Activated CD4-positive, alpha-beta T cell treated with anti-CD3 and anti-CD28 coated beads, Interleukin-2, amount 10 ng/mL, durations not matched to agents 24 days and 14 days (primary cell): ENCODE measurements at regions of chr10 and their contacts with region 1.

Region 1: DNA sequence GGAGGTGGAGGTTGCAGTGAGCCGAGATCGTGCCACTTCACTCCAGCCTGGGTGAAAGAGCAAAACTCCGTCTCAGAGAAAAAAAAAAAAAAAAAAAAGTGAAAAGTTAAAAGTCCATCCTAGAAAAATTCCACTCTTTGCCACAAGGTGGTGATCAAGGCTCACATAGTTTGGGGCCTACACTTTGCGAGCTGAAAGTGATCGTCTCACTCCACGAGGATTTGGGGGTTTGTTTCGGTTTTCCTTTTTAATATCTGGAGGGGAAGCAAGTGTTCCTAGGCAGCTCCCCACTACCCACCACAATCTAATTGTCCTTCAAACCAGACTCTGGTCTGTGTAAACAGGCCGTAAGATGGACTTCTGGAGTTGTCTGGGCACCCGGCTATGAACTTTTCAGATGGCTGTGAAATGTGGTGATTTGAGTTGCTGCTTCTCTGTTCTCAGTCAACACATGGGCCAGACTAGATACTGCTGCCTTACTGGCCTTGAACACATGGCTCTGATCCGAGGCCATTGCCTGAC is 27.1 kb downstream of the PRLHR start:
- DNase-seq: peak; percentile 90
- H3K4me3 Mint-ChIP-seq: no peak overlapping the region
- H3K27ac Mint-ChIP-seq: no peak overlapping the region
- H3K4me1 Mint-ChIP-seq: no peaks in the 10 kb centered on the region
- H3K27me3 Mint-ChIP-seq: peaks cover 8% of the 10 kb centered on the region

Region 2: DNA sequence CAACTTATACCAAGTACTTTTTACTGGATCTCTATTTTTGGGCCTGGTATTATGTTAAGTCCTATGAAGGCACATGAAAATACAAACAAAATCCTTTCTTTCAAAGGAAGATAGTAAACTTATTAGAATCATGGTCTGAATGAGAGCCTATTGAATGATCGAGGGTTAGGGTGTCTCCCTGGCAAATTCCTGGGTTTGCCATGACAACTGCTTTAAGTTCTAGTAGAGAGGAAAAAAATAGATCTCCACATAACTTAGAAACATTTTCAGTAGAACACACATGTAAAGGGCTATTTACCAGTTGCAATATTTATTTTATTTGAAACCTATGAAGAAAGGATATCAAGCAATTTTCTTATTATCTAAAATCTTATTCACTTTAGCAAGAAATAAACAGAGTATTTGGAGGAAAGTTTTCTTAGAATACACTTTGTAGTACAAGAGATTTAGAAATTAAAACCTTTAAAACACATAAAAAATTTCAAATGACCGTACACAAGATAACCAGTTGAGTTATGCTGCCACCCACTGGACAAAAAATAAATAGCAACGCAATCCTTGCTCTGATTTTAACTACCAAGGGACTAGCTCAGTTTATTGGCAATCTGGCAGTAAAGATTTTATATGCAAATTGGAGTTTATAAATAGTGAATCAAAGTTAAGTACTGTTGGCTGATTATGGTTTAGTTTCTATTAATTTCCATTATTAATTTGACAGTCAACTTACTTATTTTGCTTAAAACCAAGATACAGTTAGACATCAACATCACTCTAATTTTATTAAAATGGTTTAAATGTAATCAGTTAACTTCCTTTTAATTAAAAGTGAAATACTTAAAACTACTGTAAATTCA is 152.5 kb after region 1 on chr10:
- intact Hi-C with region 1: loop called (anchors 1 kb)
- DNase-seq: peak; percentile 90
- H3K4me3 Mint-ChIP-seq: no peak overlapping the region
- H3K27ac Mint-ChIP-seq: no peak overlapping the region
- H3K4me1 Mint-ChIP-seq: peaks cover 12% of the 10 kb centered on the region
- H3K27me3 Mint-ChIP-seq: no peaks in the 10 kb centered on the region

Region 3: DNA sequence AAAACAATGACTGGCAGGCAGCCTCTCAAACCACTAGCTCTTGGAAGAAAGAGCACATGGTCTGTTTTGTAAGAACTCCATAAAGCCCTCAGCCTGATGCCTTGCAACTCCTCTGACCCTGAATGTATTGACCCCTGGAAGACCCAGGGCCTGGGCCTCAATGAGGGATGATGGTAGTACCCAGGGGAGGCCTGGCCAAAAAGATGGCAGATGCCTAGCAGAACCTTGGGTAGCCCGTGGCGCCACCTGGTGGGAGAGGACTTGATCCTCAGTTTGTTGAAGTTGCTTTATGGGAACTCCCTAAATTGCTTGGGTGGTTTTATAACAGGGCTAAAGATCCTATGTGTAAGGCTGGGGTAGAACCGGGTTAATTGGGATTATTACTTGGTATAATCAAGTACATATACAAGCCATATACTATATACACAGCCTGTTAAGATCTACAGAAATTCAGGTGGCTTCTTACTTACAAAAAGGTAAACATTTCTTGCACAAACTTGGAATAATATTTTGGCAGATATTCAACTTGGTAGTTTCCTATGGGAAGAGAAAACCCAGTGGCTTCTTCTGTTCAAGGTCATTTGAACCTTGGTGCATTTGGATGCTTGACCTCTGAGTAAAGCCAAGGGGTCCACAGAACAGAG is 282.2 kb after region 1 on chr10:
- intact Hi-C with region 1: loop called (anchors 1 kb)
- DNase-seq: peak; percentile 89
- H3K4me3 Mint-ChIP-seq: no peak overlapping the region
- H3K27ac Mint-ChIP-seq: no peak overlapping the region
- H3K4me1 Mint-ChIP-seq: no peaks in the 10 kb centered on the region
- H3K27me3 Mint-ChIP-seq: peaks cover 9% of the 10 kb centered on the region

Region 4: DNA sequence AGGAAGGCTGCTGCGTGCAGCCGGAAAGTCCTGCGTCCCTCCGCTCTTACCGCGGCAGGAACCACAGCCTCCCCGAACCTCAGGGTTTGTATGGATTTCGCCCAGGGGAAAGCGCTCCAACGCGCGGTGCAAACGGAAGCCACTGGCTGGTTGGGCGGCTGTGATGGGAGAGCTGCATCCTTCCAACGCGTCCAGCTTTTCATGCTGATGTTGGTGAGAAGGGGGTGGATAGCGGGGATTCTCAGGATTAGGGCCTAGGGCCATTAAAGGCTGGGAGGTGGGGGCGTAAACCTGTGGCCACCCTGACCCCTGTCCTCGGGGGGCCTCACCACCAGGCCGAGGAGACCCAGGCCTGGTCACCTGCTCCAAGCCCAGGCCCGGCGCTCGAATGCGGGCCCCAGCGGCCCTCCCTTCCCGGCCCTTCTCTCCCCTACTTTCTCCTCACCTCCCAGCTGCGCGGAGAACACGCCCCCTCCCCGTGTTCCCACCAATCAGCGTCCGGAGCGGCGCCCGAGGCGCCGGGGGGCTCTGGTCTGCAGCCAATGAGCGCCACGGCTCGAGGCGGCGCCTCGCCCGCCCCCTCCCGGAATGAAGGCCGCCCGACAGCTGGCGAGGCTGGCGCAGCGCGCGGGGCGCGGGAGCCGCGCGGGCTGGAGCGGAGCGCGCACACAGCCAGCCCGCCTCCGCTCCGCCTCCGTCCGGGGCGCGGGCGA is 460.7 kb after region 1 on chr10:
- intact Hi-C with region 1: loop called (anchors 5 kb)
- DNase-seq: peak; percentile 94
- H3K4me3 Mint-ChIP-seq: peak overlapping the region; percentile 66
- H3K27ac Mint-ChIP-seq: no peak overlapping the region
- H3K4me1 Mint-ChIP-seq: peaks cover 20% of the 10 kb centered on the region
- H3K27me3 Mint-ChIP-seq: peaks cover 13% of the 10 kb centered on the region